B cell (primary cell): ENCODE measurements at regions of chr11 and their contacts with region 1.

Region 1: GRCh38 chr11:71977743-71978418 is 20.8 kb upstream of the IL18BP start:
- DNase-seq: peak; percentile 86
- ATAC-seq: peak; percentile 96
- H3K4me3 ChIP-seq: no peak overlapping the region
- H3K4me3 Mint-ChIP-seq: peak overlapping the region; percentile 38
- H3K27ac ChIP-seq: peak overlapping the region; percentile 64 to 72
- H3K27ac Mint-ChIP-seq: peak overlapping the region; percentile 93
- H3K4me1 ChIP-seq: peaks cover 17 to 25% of the 10 kb centered on the region in 2 donors
- H3K4me1 Mint-ChIP-seq: peaks cover 25% of the 10 kb centered on the region
- H3K27me3 ChIP-seq: no peaks in the 10 kb centered on the region
- H3K27me3 Mint-ChIP-seq: no peaks in the 10 kb centered on the region
- CTCF ChIP-seq: peak; percentile 82

Region 2: GRCh38 chr11:71928737-71929452 is 49.0 kb before region 1 on chr11 and contains the start of gene RNF121:
- CTCF ChIA-PET with region 1: interaction called, 4 read pairs
- POLR2A ChIA-PET with region 1: interaction called, 3 read pairs
- intact Hi-C with region 1: loop called (anchors 5 kb)
- DNase-seq: peak; percentile 97
- ATAC-seq: peak; percentile 91
- H3K4me3 ChIP-seq: peak within 1 kb of the TSS; percentile 89 to 100 (median 99)
- H3K4me3 Mint-ChIP-seq: peak within 1 kb of the TSS; percentile 96
- H3K27ac ChIP-seq: peak within 1 kb of the TSS; percentile 92 to 93
- H3K27ac Mint-ChIP-seq: peak within 1 kb of the TSS; percentile 98
- H3K4me1 ChIP-seq: peaks cover 35 to 46% of the 10 kb centered on the region in 2 donors
- H3K4me1 Mint-ChIP-seq: peaks cover 59% of the 10 kb centered on the region
- H3K27me3 ChIP-seq: no peaks in the 10 kb centered on the region
- H3K27me3 Mint-ChIP-seq: no peaks in the 10 kb centered on the region
- CTCF ChIP-seq: no peak
- total RNA-seq, gene RNF121: 54.5 and 56.0 TPM in 2 replicates

Region 3: GRCh38 chr11:71991494-71991893 is 13.6 kb after region 1 on chr11:
- CTCF ChIA-PET with region 1: interaction called, 29 read pairs
- POLR2A ChIA-PET with region 1: no interaction called
- intact Hi-C with region 1: loop called (anchors 1 kb)
- DNase-seq: peak; percentile 84
- ATAC-seq: peak; percentile 76
- H3K4me3 ChIP-seq: no peak overlapping the region
- H3K4me3 Mint-ChIP-seq: peak overlapping the region; percentile 7
- H3K27ac ChIP-seq: peak overlapping the region in 1 of 2 donors; percentile 22
- H3K27ac Mint-ChIP-seq: peak overlapping the region; percentile 34
- H3K4me1 ChIP-seq: peaks cover 39 to 59% of the 10 kb centered on the region in 2 donors
- H3K4me1 Mint-ChIP-seq: peaks cover 49% of the 10 kb centered on the region
- H3K27me3 ChIP-seq: no peaks in the 10 kb centered on the region
- H3K27me3 Mint-ChIP-seq: no peaks in the 10 kb centered on the region
- CTCF ChIP-seq: no peak

Region 4: GRCh38 chr11:71998662-71999310 is 20.9 kb after region 1 on chr11 and contains the start of gene IL18BP:
- CTCF ChIA-PET with region 1: interaction called, 17 read pairs
- POLR2A ChIA-PET with region 1: no interaction called
- intact Hi-C with region 1: loop called (anchors 1 kb)
- DNase-seq: peak; percentile 64
- ATAC-seq: peak; percentile 70
- H3K4me3 ChIP-seq: peak within 1 kb of the TSS in 4 of 5 experiments; percentile 35 to 62 (median 50)
- H3K4me3 Mint-ChIP-seq: peak within 1 kb of the TSS; percentile 88
- H3K27ac ChIP-seq: peak within 1 kb of the TSS; percentile 72 to 78
- H3K27ac Mint-ChIP-seq: peak within 1 kb of the TSS; percentile 95
- H3K4me1 ChIP-seq: peaks cover 25 to 50% of the 10 kb centered on the region in 2 donors
- H3K4me1 Mint-ChIP-seq: peaks cover 49% of the 10 kb centered on the region
- H3K27me3 ChIP-seq: no peaks in the 10 kb centered on the region
- H3K27me3 Mint-ChIP-seq: no peaks in the 10 kb centered on the region
- CTCF ChIP-seq: no peak
- total RNA-seq, gene IL18BP: 25.9 and 30.7 TPM in 2 replicates

Region 5: GRCh38 chr11:72015511-72016171 is 37.8 kb after region 1 on chr11:
- CTCF ChIA-PET with region 1: interaction called, 77 read pairs
- POLR2A ChIA-PET with region 1: no interaction called
- intact Hi-C with region 1: no loop called
- DNase-seq: peak; percentile 44
- ATAC-seq: no peak
- H3K4me3 ChIP-seq: no peak overlapping the region
- H3K4me3 Mint-ChIP-seq: no peak overlapping the region
- H3K27ac ChIP-seq: no peak overlapping the region
- H3K27ac Mint-ChIP-seq: peak overlapping the region; percentile 46
- H3K4me1 ChIP-seq: no peaks in the 10 kb centered on the region
- H3K4me1 Mint-ChIP-seq: no peaks in the 10 kb centered on the region
- H3K27me3 ChIP-seq: no peaks in the 10 kb centered on the region
- H3K27me3 Mint-ChIP-seq: no peaks in the 10 kb centered on the region
- CTCF ChIP-seq: peak; percentile 29

Region 6: GRCh38 chr11:72112321-72113219 is 134.7 kb after region 1 on chr11 and contains the start of gene ANAPC15:
- CTCF ChIA-PET with region 1: no interaction called
- POLR2A ChIA-PET with region 1: no interaction called
- intact Hi-C with region 1: no loop called
- DNase-seq: peak; percentile 99
- ATAC-seq: peak; percentile 89
- H3K4me3 ChIP-seq: peak within 1 kb of the TSS; percentile 67 to 94 (median 78)
- H3K4me3 Mint-ChIP-seq: peak within 1 kb of the TSS; percentile 93
- H3K27ac ChIP-seq: peak within 1 kb of the TSS; percentile 95
- H3K27ac Mint-ChIP-seq: peak within 1 kb of the TSS; percentile 98
- H3K4me1 ChIP-seq: peaks cover 14 to 19% of the 10 kb centered on the region in 2 donors
- H3K4me1 Mint-ChIP-seq: peaks cover 20% of the 10 kb centered on the region
- H3K27me3 ChIP-seq: peaks cover 0 to 12% (median 0%) of the 10 kb centered on the region in 4 experiments
- H3K27me3 Mint-ChIP-seq: peaks cover 14% of the 10 kb centered on the region
- CTCF ChIP-seq: no peak
- total RNA-seq, gene ANAPC15: 27.1 and 29.2 TPM in 2 replicates

Region 7: GRCh38 chr11:72141066-72141465 is 163.2 kb after region 1 on chr11:
- CTCF ChIA-PET with region 1: interaction called, 53 read pairs
- POLR2A ChIA-PET with region 1: no interaction called
- intact Hi-C with region 1: loop called (anchors 2 kb)
- DNase-seq: no peak
- ATAC-seq: no peak
- H3K4me3 ChIP-seq: no peak overlapping the region
- H3K4me3 Mint-ChIP-seq: no peak overlapping the region
- H3K27ac ChIP-seq: no peak overlapping the region
- H3K27ac Mint-ChIP-seq: no peak overlapping the region
- H3K4me1 ChIP-seq: no peaks in the 10 kb centered on the region
- H3K4me1 Mint-ChIP-seq: no peaks in the 10 kb centered on the region
- H3K27me3 ChIP-seq: peaks cover 0 to 3% (median 0%) of the 10 kb centered on the region in 4 experiments
- H3K27me3 Mint-ChIP-seq: peaks cover 19% of the 10 kb centered on the region
- CTCF ChIP-seq: no peak